H1 (cell line): ENCODE measurements at regions of chr22 and their contacts with region 1.

Region 1: DNA sequence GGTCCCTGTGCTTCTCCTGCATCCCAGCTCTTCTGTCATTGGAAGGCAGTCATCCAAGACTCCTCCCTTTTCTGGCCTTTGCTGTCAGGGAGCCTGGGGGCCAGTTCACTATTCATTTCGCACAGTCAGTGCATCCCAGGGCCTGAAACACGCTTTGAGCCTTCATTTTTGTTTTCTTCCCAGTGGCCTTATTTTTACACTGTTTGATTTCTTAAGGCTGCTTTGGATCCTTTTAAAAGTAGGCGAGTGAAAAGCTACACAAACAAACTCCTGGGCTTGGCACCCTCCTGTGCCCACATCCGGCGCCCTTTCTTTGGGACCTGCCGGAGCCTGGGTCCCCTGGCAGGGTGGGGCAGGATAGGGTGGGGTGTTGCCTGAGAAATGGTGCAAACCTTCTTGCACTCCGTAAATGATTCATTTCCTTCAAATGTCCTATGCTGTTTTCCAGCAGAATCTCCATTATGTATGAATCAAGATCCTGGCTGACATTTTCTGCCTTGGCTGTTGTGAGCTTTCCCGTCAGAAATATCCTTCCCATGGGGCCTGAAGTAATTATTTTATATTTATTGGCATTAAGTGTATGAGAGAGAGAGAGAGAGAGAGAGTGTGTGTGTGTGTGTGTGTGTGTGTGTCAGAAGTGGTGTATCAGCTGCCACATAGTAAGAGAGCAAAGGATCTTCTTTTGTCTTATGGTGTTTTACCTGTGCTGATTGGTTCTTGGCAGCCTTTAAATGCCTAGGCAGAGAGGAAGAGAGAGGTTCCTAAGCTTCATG is 45.6 kb downstream of the BCR start:
- DNase-seq: no peak
- H3K4me3 ChIP-seq: no peak overlapping the region
- H3K27ac ChIP-seq: no peak overlapping the region
- H3K4me1 ChIP-seq: peaks cover 16 to 43% (median 27%) of the 10 kb centered on the region in 4 experiments
- H3K27me3 ChIP-seq: no peaks in the 10 kb centered on the region
- CTCF ChIP-seq: no peak
- EP300 ChIP-seq: no peak
- POLR2A ChIP-seq: no peak
- RAD21 ChIP-seq: no peak

Region 2: DNA sequence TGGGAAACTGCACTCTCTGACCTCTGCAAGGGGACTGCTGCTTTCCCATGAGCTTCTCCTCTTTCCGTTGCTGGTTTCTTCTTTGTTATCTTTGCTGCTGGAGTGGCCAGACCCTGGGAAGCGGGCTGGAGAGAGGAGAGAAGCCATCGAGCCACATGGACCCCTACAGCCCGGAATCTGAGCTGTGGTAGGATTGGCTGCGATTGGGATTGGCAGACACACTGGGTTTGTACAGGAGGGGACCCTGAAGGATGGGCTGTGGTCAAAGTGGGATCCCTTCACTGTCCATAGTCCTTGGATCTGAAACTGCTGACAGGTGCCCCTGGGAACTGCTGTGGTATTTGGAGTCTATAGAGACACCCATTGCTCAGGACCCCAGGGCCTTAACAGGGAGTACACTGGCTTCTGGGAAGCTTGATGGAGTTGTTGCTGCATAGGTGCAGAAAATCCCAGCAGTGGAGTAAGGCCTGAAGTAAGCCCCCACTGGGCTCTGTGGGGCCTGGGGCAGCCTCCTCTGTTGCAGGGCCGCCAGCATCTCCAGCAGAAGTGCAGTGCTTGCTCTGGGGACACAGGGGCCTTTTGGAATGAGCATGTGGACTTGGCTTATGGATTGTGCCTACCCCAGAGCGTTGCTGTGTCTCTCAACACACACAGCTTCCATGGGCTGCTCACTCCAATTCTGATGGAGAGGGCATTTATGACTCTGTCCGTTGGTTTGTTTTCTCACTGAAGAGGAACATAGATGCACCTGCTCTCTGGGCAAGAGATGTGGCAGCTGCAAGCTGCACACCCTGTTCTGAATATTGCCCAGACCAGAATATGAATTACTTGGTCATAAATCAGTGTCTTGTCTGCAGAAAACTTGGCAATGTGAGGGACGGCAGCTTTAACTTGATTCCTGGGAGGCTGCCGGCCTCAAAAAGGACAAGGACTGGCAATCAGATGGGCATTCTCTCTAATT is 13.6 kb before region 1 on chr22:
- CTCF ChIA-PET with region 1: interaction called, 8 read pairs
- POLR2A ChIA-PET with region 1: interaction called, 10 read pairs
- DNase-seq: no peak
- H3K4me3 ChIP-seq: no peak overlapping the region
- H3K27ac ChIP-seq: no peak overlapping the region
- H3K4me1 ChIP-seq: peaks cover 0 to 9% (median 0%) of the 10 kb centered on the region in 4 experiments; a peak in 5 of 7 replicates
- H3K27me3 ChIP-seq: no peaks in the 10 kb centered on the region
- CTCF ChIP-seq: no peak
- EP300 ChIP-seq: no peak
- POLR2A ChIP-seq: no peak
- RAD21 ChIP-seq: no peak